Posterior cingulate gyrus (tissue), 11 donors: ENCODE measurements at regions of chr7 and their contacts with region 1.

Region 1: DNA sequence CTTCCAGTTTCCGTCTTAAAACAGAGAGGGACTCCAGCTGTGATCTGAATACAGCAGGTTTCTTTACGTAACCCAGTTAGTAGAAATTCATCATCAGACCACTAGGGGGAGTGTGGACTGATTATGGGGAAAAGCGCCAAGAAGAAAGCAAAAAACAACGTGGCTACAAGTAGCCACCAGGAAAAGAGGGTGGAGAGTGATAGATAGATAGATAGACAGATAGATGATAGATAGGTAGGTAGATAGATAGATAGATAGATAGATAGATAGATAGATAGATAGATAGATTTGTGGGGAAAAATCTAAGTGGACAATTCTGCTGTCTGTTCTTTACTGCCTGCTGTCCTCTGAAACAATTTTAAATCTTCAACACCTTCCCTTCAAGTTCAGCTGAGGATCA is 12.7 kb upstream of the AKR1B10 start:
- DNase-seq: no peak

Region 2: DNA sequence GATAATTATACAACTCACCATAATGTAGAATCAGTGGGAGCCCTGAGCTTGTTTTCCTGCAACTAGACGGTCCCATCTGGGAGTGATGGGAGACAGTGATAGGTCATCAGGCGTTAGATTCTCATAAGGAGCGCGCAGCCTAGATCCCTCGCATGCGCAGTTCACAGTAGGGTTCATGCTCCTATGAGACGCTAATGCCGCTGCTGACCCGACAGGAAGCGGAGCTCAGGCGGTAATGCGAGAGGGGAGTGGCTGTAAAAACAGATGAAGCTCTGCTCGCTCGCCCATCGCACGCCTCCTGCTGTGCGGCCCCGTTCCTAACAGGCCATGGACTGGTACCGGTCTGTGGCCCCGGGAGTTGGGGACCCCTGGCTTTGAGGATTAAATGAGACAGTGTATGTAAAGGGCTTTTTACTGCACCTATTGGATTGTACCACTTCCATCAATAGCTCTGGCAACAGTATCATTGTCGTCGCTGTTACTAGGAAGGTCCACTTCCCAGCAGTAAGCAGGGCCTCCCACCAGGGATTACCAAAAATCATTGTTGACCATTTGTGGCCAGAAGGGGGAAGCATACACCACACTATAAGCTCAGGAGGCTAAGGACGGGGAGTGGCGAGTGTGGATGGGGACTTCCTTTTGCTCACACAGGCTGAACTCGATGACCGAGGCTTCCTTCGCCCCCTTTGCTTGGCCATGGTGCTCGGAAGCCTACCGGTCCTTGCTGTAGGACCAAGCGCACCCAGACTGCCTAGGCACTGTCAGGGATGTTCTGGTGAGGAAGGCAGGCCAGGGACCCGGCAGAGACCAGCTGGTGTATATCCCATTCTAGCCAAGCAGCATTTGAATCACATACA is 82.1 kb before region 1 on chr7:
- intact Hi-C with region 1: loop called (anchors 2 kb)
- DNase-seq: peak; percentile 50 to 95 (median 73)

Region 3: DNA sequence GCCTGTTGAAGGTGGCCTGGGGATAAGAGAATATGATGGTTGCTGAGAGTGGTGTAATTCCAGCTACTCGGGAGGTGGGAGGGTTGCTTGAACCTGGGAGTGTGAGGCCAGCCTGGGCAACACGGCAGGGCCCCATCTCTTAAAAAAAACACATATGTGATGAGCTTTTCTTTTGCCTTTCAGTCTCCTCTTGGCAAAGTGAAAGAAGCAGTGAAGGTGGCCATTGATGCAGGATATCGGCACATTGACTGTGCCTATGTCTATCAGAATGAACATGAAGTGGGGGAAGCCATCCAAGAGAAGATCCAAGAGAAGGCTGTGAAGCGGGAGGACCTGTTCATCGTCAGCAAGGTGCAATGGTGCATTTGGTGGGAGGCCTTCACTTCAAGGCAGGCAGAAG is 15.8 kb after region 1 on chr7:
- intact Hi-C with region 1: loop called (anchors 2 kb)
- DNase-seq: no peak

Region 4: DNA sequence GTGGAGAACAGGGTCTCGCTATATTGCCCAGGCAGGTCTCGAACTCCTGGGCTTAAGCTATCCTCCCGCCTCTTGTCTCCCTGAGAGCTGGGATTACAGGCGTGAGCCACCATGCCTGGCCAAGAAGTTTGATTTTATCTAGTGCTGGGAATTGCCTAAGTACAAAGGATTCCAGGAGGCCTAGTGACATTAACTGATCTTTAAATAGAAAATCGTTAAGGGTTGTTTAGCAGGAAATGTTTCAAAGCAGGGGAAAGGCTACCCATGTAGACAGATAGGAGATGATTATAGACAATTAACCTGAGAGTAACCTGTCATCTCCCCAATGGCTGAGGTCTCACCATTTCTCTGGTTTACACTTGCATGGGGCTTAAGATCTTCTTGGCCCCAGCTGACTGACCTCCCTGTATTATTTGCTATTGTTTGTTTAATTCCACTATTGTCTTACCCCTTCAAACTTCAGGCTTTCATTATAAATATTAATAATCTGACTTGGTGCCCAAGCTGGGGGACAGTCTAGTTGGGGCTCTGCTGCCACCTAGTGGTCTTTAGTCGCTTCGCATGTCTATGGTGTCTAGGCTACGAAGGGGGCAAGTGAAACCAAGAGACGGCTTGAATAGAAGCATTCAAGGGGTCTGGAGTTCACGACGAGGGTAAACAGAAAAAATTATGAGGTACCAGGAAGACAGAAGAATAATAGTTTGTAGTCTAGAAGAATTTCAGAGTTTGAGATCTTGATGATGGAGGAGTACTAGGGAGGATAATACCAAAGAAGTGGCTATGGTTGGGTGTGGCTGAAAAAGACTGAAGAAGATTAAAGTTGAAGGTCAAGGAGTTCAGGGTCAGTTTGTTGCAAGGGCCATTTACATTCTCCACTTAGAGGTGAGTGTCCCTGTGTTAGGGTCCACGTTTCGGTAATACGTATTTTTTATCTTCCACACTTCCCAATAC is 91.6 kb after region 1 on chr7:
- intact Hi-C with region 1: loop called (anchors 1 kb)
- DNase-seq: peak in 7 of 10 donors; percentile 48 to 94 (median 74)